ENCODE measurements at regions of chr4 and their contacts with region 1.

Region 1: DNA sequence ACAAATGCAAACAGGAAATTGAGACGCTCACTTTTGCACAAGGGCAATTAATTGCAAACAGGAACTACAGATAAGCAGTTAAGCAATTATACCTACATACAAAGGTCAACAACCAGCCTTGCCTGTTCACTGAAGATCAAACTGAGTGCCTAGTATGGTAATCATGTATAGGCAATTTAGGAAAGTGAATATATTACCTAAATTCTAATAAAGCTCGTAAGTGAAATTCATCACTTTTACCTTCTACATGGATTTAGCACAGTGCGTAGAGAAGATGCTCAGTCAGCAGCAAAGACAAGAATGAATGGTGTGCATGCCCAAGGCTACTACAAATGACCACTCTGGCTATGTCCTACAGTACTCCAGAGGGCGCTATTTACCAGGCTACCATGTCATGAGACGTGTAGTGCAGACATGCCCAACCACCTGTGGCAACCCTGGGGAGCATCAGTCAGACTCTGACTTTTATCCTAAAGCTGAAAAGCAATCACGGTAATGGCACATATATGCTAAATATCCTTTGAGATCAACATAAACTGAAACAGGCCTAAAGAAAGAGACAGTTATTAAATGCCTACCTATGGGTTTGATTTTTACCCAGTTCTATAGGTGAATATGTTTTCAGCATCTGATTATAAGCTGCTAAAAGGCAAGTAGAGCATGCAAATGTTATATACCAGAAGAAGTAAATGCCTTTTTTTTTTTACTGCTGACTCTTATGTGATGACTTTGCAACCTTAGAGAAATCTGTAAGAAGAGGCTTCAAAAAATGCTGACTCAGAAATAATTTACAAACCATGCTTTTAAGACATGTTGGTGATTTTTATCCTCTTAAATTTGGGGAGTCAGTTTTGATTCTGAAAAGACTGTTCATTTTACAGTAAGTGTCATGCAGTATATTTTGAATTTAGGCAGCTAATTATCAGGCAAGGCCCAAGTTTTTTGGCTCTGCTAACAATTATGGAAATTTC is 178.0 kb downstream of the PPP3CA start:
- DNase-seq: peak; percentile 58
- H3K4me3 ChIP-seq: no peak overlapping the region
- H3K27ac ChIP-seq: no peak overlapping the region
- H3K4me1 ChIP-seq: peaks cover 28% of the 10 kb centered on the region
- H3K27me3 ChIP-seq: no peaks in the 10 kb centered on the region
- CTCF ChIP-seq: peak; percentile 80 to 83

Region 2: GRCh38 chr4:100907465-100908454 is 261.6 kb before region 1 on chr4:
- CTCF ChIA-PET with region 1: no interaction called
- dilution Hi-C with region 1: no loop called
- in situ Hi-C with region 1: no loop called
- intact Hi-C with region 1: loop called (anchors 10 kb)
- DNase-seq: peak; percentile 23
- H3K4me3 ChIP-seq: no peak overlapping the region
- H3K27ac ChIP-seq: no peak overlapping the region
- H3K4me1 ChIP-seq: no peaks in the 10 kb centered on the region
- H3K27me3 ChIP-seq: no peaks in the 10 kb centered on the region
- CTCF ChIP-seq: peak; percentile 36 to 45

Region 3: GRCh38 chr4:101103381-101104142 is 65.8 kb before region 1 on chr4:
- CTCF ChIA-PET with region 1: no interaction called
- dilution Hi-C with region 1: no loop called
- in situ Hi-C with region 1: no loop called
- intact Hi-C with region 1: no loop called
- DNase-seq: no peak
- H3K4me3 ChIP-seq: no peak overlapping the region
- H3K27ac ChIP-seq: no peak overlapping the region
- H3K4me1 ChIP-seq: no peaks in the 10 kb centered on the region
- H3K27me3 ChIP-seq: no peaks in the 10 kb centered on the region
- CTCF ChIP-seq: no peak

Region 4: DNA sequence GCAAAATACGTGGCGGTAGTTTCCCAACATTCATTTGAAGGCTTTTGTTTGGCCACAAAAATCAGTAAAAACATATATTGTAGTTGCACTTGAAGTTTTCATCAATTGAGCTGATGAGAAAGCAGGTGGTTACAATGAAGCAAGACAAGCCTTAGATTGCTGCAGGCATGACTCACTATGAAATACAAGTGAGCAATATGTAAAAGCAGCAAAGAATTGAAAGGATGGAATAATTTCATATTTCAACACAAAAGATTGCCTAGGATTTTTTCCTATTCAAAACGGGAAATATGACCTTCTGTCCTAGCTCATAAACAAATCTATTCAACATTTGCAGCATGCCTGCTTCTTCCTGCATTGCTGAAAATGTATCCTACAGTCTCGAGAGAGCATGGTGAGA is 430.3 kb after region 1 on chr4:
- CTCF ChIA-PET with region 1: no interaction called
- dilution Hi-C with region 1: no loop called
- in situ Hi-C with region 1: no loop called
- intact Hi-C with region 1: loop called (anchors 5 kb)
- DNase-seq: peak; percentile 84
- H3K4me3 ChIP-seq: no peak overlapping the region
- H3K27ac ChIP-seq: no peak overlapping the region
- H3K4me1 ChIP-seq: peaks cover 10% of the 10 kb centered on the region
- H3K27me3 ChIP-seq: no peaks in the 10 kb centered on the region
- CTCF ChIP-seq: no peak

Region 5: DNA sequence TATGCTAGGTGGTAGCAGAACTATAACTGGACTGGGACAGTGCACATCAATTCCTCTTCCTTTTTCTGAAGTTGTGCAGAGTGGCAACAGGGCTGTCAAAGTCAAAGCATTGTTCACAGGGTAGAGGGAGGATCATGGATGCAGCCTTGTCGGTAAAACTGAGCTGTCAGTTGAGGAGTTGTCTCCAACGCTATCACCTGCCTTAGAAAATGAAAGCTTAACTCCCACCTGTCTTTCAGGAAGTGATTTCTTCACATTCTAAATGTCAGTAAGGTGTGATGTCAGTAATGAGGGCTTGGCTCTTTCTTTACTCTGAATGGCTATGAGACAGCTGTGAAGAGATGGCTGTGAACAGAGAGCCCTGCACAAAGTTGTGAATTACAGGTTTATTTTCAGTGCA is 554.8 kb after region 1 on chr4:
- CTCF ChIA-PET with region 1: no interaction called
- dilution Hi-C with region 1: no loop called
- in situ Hi-C with region 1: loop called (anchors 25 kb)
- intact Hi-C with region 1: no loop called
- DNase-seq: no peak
- H3K4me3 ChIP-seq: no peak overlapping the region
- H3K27ac ChIP-seq: no peak overlapping the region
- H3K4me1 ChIP-seq: no peaks in the 10 kb centered on the region
- H3K27me3 ChIP-seq: no peaks in the 10 kb centered on the region
- CTCF ChIP-seq: no peak

Region 6: DNA sequence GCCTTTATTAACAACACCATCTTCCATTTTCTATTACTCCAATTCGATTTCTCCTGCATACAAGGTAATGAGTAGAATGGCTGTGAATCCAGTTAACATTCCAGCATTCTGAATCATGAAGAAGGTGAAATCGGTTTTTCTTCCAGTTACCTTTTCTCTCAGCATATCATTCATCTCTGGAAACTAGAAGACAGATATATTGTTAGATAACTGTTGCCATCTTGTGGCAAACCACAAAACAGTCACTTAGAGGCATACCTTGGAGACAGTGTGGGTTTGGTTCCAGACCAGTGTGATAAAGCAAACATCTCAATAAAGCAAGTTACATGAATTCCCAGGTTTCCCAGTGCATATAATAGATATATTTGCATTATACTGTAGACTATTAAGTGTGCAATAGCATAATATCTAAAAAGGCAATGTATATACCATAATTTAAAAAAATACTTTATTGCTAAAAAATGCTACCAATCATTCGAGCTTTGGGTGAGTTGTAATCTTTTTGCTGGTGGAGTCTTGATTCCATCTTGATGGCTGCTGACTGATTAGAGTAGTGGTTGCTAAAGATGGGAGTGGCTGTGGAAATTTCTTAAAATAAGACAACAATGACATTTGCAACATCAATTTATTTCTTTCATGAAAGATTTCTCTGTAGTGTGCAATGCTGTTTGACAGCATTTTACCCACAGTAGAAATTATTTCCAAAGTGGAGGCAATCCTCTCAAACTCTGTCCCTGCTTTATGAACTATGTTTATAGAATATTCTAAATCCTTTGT is 1093.9 kb after region 1 on chr4:
- CTCF ChIA-PET with region 1: no interaction called
- dilution Hi-C with region 1: no loop called
- in situ Hi-C with region 1: no loop called
- intact Hi-C with region 1: loop called (anchors 2 kb)
- DNase-seq: peak; percentile 70
- H3K4me3 ChIP-seq: no peak overlapping the region
- H3K27ac ChIP-seq: no peak overlapping the region
- H3K4me1 ChIP-seq: no peaks in the 10 kb centered on the region
- H3K27me3 ChIP-seq: no peaks in the 10 kb centered on the region
- CTCF ChIP-seq: peak; percentile 50 to 62